Activated CD4-positive, alpha-beta T cell treated with anti-CD3 and anti-CD28 coated beads for 36 hours (primary cell): ENCODE measurements at regions of chr1 and their contacts with region 1.

Region 1: GRCh38 chr1:169161496-169162194 is 55.2 kb downstream of the ATP1B1 start:
- DNase-seq: no peak
- ATAC-seq: no peak
- H3K4me3 Mint-ChIP-seq: no peak overlapping the region
- H3K27ac Mint-ChIP-seq: no peak overlapping the region
- H3K4me1 Mint-ChIP-seq: peaks cover 8% of the 10 kb centered on the region
- H3K27me3 Mint-ChIP-seq: no peaks in the 10 kb centered on the region

Region 2: GRCh38 chr1:169060906-169061639 is 100.6 kb before region 1 on chr1:
- CTCF ChIA-PET with region 1: no interaction called
- POLR2A ChIA-PET with region 1: no interaction called
- intact Hi-C with region 1: no loop called
- DNase-seq: no peak
- ATAC-seq: no peak
- H3K4me3 Mint-ChIP-seq: no peak overlapping the region
- H3K27ac Mint-ChIP-seq: no peak overlapping the region
- H3K4me1 Mint-ChIP-seq: peaks cover 6% of the 10 kb centered on the region
- H3K27me3 Mint-ChIP-seq: peaks cover 2% of the 10 kb centered on the region

Region 3: DNA sequence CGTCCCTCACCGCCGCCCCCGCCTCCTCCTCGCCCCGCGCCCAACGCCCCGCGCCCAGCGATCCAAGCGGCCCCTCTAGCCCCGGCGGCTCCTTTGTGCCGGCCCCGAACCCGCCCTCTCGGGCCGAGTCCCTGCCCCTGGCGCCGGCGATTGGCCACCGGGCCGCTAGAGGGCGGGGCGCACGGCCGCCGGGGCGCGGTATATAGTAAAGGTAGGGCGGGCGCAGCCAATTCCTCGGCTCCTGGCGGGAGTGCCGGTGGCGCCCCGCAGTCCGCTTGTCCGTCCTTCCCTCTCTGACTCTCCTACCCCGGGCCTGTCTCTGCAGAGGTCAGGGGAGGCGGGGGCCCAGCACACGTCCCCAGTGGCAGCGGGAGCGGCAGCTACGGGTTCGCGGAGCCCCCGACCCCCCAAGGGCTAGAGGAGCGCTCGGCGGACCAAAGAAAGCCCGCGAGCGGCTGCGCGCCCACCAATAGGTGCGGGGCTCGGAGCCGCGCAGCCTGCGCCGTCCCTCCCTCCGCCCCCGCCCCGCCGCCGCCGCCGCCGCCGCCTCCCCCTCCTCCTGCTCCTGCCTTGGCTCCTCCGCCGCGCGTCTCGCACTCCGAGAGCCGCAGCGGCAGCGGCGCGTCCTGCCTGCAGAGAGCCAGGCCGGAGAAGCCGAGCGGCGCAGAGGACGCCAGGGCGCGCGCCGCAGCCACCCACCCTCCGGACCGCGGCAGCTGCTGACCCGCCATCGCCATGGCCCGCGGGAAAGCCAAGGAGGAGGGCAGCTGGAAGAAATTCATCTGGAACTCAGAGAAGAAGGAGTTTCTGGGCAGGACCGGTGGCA is 55.3 kb before region 1 on chr1 and contains the start of gene ATP1B1:
- CTCF ChIA-PET with region 1: no interaction called
- POLR2A ChIA-PET with region 1: no interaction called
- intact Hi-C with region 1: loop called in 1 of 2 experiments (anchors 2 kb)
- DNase-seq: peak; percentile 88
- ATAC-seq: peak; percentile 91
- H3K4me3 Mint-ChIP-seq: peak within 1 kb of the TSS; percentile 78
- H3K27ac Mint-ChIP-seq: peak within 1 kb of the TSS; percentile 63
- H3K4me1 Mint-ChIP-seq: peaks cover 41% of the 10 kb centered on the region
- H3K27me3 Mint-ChIP-seq: peaks cover 18% of the 10 kb centered on the region
- total RNA-seq, gene ATP1B1: 2.9 to 3.3 TPM

Region 4: DNA sequence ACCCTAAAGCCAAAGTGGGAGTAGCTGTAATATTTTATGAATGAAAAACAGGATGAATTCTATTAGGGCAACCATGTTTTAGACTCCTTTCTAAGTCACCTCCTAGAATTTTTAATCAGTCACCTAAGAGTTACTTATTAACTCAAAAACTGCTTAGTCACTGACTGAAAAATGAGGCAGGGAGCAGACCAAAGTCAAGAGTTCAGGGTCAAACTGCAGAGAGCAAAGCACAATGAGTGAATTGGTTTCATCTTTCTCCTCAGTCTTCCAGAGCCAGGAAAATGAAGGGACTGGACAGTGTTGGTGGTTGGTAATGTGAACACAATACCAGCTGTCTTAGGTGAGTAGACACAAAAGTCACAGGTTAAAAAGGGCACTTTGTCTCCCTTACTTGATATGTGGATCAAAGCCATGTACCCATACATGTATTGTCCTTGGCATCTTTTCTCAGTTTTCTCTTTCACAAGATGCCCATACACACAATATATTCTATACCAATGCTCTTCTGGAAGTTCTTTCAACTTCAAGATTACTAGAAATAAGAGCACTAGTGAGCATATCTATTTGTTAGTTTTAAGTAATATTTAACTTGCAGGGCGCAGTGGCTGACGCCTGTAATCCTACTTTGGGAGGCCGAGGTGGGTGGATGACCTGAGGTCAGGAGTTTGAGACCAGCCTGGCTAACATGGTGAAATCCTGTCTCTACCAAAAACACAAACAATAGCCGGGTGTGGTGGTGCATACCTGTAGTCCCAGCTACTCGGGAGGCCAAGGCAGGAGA is 13.0 kb before region 1 on chr1:
- CTCF ChIA-PET with region 1: no interaction called
- POLR2A ChIA-PET with region 1: no interaction called
- intact Hi-C with region 1: no loop called
- DNase-seq: no peak
- ATAC-seq: no peak
- H3K4me3 Mint-ChIP-seq: no peak overlapping the region
- H3K27ac Mint-ChIP-seq: no peak overlapping the region
- H3K4me1 Mint-ChIP-seq: no peaks in the 10 kb centered on the region
- H3K27me3 Mint-ChIP-seq: no peaks in the 10 kb centered on the region